ENCODE measurements at regions of chr5 and their contacts with region 1.

Region 1: DNA sequence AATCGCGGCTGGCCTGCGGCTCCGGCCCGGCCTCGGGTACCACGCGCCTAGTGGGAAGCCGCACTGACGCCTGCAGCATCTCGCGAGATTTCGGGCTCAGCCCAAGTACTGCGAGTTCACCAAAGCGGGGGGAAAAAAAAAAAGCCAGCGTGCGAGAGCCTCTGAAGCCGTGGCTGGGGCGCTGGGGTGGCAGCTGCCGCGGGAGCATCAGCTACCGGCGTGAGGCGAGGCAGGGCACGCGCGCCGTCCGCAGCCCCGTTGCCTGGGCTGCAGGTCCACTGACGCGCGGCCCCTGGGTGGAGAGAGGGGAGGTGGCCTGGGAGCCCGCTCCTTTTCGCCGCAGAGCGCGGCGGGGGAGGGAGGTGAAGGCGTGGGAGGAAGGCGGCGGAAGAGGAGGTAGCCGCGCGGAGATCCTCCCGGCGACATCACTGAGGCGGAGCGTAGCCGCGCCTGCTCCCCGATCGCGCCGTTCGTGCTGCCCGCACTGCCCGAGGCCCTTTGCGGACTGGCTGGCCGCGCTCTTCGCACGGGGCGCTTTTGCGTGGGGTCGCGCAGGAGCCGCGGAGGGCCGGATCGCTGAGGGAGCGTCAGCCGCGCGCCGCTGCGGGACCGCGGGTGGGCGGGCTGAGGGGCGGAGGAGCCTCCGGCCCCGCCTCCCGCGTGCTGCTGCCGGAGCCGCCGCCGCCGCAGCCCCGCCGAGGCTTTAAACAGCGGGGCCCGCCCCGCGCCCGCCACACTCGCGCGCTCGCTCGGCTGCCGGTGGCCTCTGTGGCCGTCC is at the start of gene SLC12A2:
- DNase-seq: peak; percentile 98
- H3K4me3 Mint-ChIP-seq: peak within 1 kb of the TSS; percentile 94
- H3K27ac Mint-ChIP-seq: peak within 1 kb of the TSS; percentile 66
- H3K4me1 Mint-ChIP-seq: peaks cover 54% of the 10 kb centered on the region
- H3K27me3 Mint-ChIP-seq: no peaks in the 10 kb centered on the region
- CTCF ChIP-seq: no peak
- total RNA-seq, gene SLC12A2: 26.8 and 29.8 TPM in 2 replicates

Region 2: DNA sequence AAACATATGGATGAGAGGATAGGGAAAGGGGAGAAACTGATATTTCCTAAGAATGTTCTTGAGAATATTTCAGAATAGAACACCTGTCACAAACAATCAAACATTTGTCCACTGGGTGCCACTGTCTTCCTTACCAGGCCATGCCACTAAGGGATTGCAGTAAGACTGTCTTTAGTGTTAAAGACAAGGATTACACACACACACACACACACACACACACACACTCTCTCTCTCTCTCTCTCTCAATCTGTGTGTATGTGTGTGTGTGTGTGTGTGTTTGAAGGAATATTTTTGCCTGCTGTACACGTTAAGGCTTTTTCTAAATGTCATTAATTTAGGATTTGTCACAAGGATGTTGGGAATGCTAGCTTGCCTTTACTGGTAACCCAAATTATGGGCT is 325.6 kb before region 1 on chr5:
- CTCF ChIA-PET with region 1: interaction called, 7 read pairs
- POLR2A ChIA-PET with region 1: interaction called, 3 read pairs
- intact Hi-C with region 1: loop called (anchors 1 kb)
- DNase-seq: peak; percentile 74
- H3K4me3 Mint-ChIP-seq: no peak overlapping the region
- H3K27ac Mint-ChIP-seq: no peak overlapping the region
- H3K4me1 Mint-ChIP-seq: no peaks in the 10 kb centered on the region
- H3K27me3 Mint-ChIP-seq: no peaks in the 10 kb centered on the region
- CTCF ChIP-seq: peak; percentile 64

Region 3: GRCh38 chr5:127909078-127909477 is 174.1 kb before region 1 on chr5:
- CTCF ChIA-PET with region 1: interaction called, 7 read pairs
- POLR2A ChIA-PET with region 1: interaction called, 4 read pairs
- intact Hi-C with region 1: loop called (anchors 1 kb)
- DNase-seq: peak; percentile 84
- H3K4me3 Mint-ChIP-seq: no peak overlapping the region
- H3K27ac Mint-ChIP-seq: no peak overlapping the region
- H3K4me1 Mint-ChIP-seq: no peaks in the 10 kb centered on the region
- H3K27me3 Mint-ChIP-seq: no peaks in the 10 kb centered on the region
- CTCF ChIP-seq: peak; percentile 60

Region 4: DNA sequence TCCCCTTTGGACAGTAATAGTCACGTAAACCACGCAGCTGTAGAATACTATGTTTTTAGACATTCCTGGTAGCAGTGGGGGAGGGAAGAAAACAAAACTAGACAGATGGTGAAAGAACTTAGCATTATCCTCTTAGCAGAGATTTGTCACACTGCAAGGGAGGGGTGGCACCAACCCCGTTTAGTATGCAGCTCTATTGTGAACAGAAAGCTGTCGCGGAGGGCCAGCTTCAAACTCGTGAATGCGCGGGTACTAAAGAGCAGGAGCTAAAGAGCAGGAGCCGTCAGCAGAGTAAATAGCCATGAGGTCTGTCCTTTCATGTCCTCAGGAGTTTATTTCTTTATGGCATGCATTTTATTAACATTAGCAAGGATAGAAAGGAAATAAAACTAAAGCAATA is 141.6 kb before region 1 on chr5:
- CTCF ChIA-PET with region 1: no interaction called
- POLR2A ChIA-PET with region 1: no interaction called
- intact Hi-C with region 1: no loop called
- DNase-seq: no peak
- H3K4me3 Mint-ChIP-seq: no peak overlapping the region
- H3K27ac Mint-ChIP-seq: no peak overlapping the region
- H3K4me1 Mint-ChIP-seq: peaks cover 7% of the 10 kb centered on the region
- H3K27me3 Mint-ChIP-seq: no peaks in the 10 kb centered on the region
- CTCF ChIP-seq: no peak

Region 5: GRCh38 chr5:127988146-127988760 is 95.0 kb before region 1 on chr5:
- CTCF ChIA-PET with region 1: interaction called, 3 read pairs
- POLR2A ChIA-PET with region 1: interaction called, 19 read pairs
- intact Hi-C with region 1: loop called (anchors 2 kb)
- DNase-seq: peak; percentile 94
- H3K4me3 Mint-ChIP-seq: no peak overlapping the region
- H3K27ac Mint-ChIP-seq: peak overlapping the region; percentile 71
- H3K4me1 Mint-ChIP-seq: peaks cover 14% of the 10 kb centered on the region
- H3K27me3 Mint-ChIP-seq: no peaks in the 10 kb centered on the region
- CTCF ChIP-seq: no peak

Region 6: DNA sequence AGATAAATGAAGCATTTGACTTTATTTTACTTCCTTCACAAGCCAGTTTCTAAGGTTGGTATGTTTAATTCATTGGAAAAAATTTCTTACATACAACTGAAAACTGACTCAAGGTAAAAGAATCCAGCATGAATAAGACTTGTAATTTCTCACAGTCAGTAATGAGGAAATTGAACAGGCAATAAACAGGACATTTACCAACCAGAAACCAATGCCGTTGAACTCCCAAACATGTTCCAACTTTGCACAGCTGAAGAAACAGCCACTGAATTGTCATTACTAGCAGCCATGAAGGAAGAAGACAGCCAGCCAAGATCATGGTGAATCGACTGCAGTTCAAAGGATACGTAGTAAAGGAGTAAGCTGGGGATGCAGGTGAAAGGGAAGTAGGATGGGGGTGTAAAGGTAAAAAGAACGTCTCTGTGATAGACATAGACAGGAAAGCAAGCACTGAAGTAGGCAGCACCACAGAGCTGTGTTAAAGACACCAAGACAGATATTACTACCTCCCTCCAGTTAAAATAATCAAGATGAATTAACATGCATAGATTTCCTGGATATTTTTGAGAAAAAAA is 21.0 kb before region 1 on chr5:
- CTCF ChIA-PET with region 1: interaction called, 3 read pairs
- POLR2A ChIA-PET with region 1: interaction called, 29 read pairs
- intact Hi-C with region 1: no loop called
- DNase-seq: peak; percentile 47
- H3K4me3 Mint-ChIP-seq: peak overlapping the region; percentile 46
- H3K27ac Mint-ChIP-seq: peak overlapping the region; percentile 83
- H3K4me1 Mint-ChIP-seq: peaks cover 20% of the 10 kb centered on the region
- H3K27me3 Mint-ChIP-seq: no peaks in the 10 kb centered on the region
- CTCF ChIP-seq: no peak

Region 7: DNA sequence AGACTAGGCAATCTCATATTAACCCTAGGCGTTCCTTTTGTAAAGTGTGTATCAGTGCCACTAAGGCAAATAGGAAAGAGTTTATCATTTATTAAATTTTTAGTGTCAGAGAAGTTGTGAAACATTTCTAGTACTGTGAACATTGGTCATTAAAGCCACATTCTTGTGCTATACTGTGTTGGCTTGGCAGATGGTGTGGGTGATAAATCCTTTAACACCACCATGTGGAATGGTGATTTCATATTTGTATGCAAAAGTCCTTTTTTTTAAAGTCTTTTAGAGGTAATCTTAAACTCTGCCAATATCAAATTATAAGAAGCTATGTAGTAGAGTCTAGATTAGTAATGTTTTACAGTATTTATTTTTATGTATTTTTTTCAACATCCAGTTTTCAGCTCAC is 18.5 kb after region 1 on chr5:
- CTCF ChIA-PET with region 1: interaction called, 5 read pairs
- POLR2A ChIA-PET with region 1: interaction called, 32 read pairs
- intact Hi-C with region 1: no loop called
- DNase-seq: no peak
- H3K4me3 Mint-ChIP-seq: no peak overlapping the region
- H3K27ac Mint-ChIP-seq: no peak overlapping the region
- H3K4me1 Mint-ChIP-seq: peaks cover 7% of the 10 kb centered on the region
- H3K27me3 Mint-ChIP-seq: no peaks in the 10 kb centered on the region
- CTCF ChIP-seq: no peak